ENCODE measurements at regions of chr10 and their contacts with region 1.

Region 1: DNA sequence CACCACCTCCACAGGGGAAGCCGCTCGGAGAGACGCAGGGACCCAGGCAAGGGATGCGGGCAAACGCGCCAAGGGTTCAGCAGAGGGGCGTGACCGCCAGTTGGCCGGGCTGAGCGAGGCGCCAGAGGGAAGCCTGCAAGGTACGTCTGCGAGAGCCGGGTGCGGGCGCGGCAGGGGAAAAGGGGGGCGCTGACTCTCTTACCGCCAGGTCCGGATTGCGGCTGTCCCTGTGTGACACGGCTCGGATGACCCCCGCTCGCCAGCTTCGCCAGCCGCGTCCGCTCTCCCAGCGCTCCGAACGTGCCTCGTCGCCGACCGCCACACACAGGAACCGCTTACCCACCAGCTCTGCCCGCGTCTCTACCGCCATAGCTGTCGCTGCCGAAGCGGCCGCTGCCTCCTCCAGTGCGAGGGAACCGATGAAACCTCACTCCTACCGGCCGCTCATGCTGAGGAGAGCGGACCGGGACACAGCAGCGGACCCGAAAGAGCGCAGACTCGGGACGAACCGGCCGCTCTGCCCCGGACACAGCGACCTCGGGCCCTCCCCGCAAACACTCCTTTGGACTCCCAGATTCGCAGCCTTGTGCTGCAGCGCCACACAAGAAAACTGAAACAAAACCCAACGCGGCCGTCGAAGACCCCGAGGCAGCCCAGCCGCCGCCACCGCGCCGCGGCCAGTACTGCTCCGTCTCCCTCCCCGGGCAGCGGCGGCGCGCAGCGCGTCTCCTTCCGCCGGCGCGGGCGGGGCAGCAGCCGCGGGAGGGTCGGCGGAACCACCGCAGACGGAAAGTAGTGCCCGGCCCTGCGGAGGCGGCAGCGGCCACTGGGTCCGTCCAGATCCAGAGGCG is at the start of gene JMJD1C:
- DNase-seq: peak; percentile 85
- ATAC-seq: peak; percentile 92 to 95
- total RNA-seq, gene JMJD1C: 40.9 to 44.3 TPM

Region 2: GRCh38 chr10:63217120-63217605 is 248.4 kb before region 1 on chr10:
- intact Hi-C with region 1: loop called in 1 of 2 experiments (anchors 10 kb)
- DNase-seq: no peak
- ATAC-seq: peak; percentile 78 to 84

Region 3: DNA sequence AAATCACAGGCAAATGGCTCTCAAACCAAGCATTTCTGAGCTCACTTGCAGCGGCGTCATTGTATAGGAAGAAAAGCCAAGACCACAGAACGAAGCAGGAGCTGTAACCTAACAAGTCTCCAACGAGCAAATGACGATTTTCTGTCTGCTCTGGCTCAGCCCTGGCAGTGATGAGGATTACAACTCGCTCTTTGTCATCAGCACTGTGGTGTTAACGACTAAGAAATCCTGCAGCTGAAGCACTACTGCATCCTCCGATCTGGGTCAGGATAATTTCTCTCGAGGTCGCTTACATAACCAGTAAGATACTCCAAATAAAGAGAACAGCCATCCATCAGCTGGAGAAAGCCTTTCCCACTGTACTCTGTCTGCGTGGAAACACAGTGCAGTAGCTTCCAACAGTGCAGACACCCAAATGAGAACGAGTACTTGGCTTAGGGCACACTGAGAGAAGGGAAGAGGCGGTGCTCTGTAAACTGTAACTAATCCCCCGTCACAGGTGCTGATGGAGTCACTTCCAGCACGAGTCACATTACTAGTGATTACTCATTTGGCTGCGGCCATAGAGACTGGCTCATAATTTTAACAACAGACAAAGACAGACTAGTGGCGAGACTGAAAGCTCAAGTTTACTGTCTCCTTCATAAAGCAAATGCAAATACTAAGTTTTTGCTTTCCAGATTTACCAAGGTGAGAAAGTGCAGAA is 196.6 kb before region 1 on chr10:
- intact Hi-C with region 1: loop called (anchors 2 to 5 kb)
- DNase-seq: peak; percentile 83
- ATAC-seq: peak; percentile 96 to 98

Region 4: DNA sequence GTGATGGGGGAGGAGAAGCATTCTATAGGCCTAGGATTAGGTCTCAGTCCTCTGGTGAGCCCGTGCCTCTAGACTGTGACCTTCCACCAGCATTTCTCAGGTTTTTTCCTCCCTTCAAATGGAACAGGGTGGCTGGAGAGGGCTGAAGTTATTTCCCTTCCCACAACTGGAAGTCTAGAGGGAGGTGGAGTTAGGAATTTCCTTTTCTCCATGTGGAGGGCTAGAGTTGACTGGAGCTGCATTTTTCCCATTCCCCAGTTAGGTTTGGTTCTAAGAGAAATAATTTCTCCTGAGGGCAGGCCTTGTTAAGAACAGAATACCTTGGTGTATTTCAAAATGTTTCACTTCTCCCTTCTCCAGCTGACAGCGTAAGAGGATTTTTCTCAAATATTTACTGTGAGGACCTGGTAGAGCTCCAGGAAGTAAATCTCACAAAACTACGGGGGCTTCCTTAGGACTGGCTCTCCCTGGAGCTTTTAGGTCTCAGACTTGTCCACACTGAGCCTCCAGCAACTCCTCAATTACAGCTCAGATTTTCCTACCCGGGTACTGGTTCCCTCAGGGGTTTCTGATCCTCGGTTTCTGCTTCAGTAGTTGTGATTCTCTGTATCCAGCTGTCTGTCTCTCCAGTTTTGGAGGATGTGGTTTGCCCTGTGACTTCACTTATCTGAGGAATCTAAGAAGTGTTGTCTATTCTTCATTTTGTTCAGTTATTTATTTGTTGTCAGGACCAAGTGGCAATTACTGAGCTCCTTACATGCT is 49.7 kb after region 1 on chr10:
- intact Hi-C with region 1: loop called in 1 of 2 experiments (anchors 5 kb)
- DNase-seq: no peak
- ATAC-seq: peak in 1 of 2 donors; percentile 62

Region 5: GRCh38 chr10:63614371-63614891 is 148.9 kb after region 1 on chr10:
- intact Hi-C with region 1: no loop called
- DNase-seq: no peak
- ATAC-seq: peak in 1 of 2 donors; percentile 90

Measured in left cardiac atrium (tissue), 4 donors.